Head of caudate nucleus (tissue), 42 donors: ENCODE measurements at regions of chr14 and their contacts with region 1.

Region 1: DNA sequence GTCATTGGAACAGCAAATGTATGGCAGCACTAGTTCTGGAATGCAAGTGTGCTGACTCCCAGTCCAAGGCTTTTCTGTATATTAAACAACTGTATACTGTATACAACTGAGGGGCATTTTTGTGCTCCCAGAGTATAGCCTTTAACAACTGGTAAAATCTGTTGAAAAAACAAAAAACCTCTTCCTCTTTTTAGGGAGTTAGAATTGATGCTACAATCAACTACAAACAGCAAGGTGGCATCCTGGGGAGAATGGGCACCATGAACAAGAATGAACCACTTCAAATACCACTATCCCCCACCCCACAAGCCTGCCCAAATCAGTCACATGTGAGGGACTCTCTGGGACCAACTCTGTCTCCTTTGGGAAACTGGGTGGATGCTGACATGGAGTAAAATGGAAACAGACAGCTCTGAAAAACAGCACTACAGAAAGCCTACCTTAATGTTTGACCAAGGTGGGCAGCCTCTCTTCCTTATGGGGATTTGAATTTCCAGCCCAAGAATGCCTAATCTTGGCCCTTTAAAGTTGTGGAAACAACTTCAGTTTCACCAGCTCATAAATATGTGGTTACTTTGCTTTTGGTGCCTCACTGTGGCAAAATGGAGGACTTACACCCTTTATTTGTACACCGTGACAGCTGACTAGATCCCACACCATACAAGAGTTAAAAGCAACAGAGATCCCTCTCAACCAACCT is 7.5 kb downstream of the VTI1B start:
- DNase-seq: peak in 21 of 42 donors; percentile 11 to 70 (median 39)

Region 2: GRCh38 chr14:67426983-67427606 is 239.8 kb before region 1 on chr14:
- intact Hi-C with region 1: loop called (anchors 10 kb)
- DNase-seq: peak; percentile 60 to 91 (median 80)

Region 3: DNA sequence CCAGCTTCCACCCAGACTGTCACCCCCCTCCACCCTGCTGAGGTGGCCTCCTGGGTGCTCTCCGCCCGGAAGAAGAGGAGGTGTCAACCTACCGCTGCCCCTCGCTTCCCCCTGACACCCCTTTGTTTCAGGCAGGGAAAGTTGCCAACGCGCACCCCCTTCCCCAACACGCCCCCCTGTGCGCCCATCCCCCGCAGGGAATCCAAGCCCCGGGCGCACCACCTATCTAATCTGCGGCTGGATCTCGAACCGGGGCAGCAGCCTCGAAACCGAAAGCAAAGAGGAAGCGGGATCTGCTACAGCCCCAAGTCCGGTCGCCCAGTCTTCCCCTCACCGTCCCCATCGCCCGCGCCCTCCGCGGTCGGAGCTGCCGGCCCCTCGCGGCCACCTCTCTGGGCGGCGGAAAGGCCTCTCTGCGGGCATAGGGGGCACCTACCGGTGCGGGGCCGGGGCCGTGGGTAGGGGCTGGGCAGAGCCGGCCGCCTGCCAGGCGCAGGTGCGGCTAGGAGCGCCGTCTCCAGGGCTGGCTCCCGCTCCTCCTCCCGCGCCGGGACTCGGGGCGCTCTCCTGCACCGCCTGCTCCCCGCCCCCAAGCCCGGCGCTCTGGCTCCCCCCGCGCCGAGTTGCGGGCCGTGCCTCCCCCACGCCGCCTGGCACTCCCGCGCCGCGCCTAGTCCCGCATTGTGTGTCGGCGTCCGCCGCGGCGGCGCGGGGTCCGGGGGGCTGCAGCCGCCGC is 152.1 kb before region 1 on chr14:
- intact Hi-C with region 1: loop called (anchors 10 kb)
- DNase-seq: peak in 36 of 42 donors; percentile 41 to 80 (median 62)

Region 4: DNA sequence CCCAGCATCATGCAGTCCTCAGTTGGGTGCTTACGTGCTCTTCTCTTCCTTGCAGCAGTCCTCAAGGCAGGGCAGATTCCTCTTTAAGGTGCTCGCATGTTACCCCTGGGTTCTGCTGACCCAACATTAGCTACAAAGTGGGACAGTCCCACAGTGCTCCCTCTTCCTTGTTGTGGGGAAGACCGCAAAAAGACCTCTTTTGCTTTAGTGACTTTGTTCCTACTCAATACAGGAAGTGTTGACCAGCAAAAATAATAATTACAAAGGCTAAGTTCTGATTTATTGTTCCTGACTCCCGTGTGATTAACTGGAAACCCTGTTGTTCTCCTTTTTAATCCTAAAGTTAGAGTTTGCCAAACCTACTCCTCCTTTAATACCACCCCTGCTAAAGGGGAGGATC is 80.5 kb before region 1 on chr14:
- intact Hi-C with region 1: no loop called
- DNase-seq: no peak

Region 5: GRCh38 chr14:67619446-67620216 is 47.3 kb before region 1 on chr14 and contains the start of gene ARG2:
- intact Hi-C with region 1: loop called (anchors 5 kb)
- DNase-seq: peak; percentile 88 to 99 (median 97)

Region 6: GRCh38 chr14:67852926-67853604 is 186.2 kb after region 1 on chr14:
- intact Hi-C with region 1: no loop called
- DNase-seq: no peak